Mammary epithelial cell (primary cell): ENCODE measurements at regions of chr11 and their contacts with region 1.

Region 1: GRCh38 chr11:58900479-58901420 is 38.5 kb upstream of the GLYATL1 start:
- DNase-seq: peak; percentile 85
- H3K4me3 ChIP-seq: peak overlapping the region in 2 of 3 experiments; percentile 1 to 27
- H3K27ac ChIP-seq: no peak overlapping the region
- H3K4me1 ChIP-seq: peaks cover 20% of the 10 kb centered on the region
- H3K27me3 ChIP-seq: no peaks in the 10 kb centered on the region
- CTCF ChIP-seq: peak; percentile 80 to 86

Region 2: DNA sequence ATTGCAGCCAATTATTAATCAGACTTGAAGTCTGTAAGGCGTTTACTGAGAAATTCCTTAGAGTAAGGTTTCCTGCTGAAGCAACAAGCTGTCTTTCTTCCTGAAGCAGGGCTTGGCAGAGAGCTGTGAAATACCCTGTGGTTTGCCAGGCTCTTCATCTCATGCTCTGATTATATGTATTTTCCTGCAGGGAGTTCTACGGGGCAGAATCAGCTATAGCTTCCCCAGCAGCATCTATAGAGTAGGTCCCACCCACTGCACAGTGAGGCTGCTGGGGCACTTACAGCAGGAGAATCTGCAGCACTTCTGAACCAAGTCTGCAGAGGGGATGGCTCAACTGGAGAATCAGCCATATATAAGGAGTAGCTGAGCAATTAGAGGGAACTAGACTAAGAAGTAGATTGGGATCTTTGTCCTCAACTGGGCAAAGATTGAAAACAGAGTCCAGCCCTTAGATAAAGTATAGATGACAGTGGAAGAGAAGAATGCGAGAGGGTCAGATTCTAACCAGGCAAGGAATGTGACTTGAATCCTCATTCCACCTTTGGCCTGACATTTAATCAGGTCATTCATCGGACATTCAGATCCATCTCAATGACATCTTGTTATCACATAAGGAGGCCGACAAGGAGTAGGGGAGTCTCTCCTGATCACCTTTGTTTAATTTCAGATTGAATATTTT is 240.7 kb before region 1 on chr11:
- CTCF ChIA-PET with region 1: interaction called, 3 read pairs
- dilution Hi-C with region 1: no loop called
- in situ Hi-C with region 1: loop called in 1 of 2 experiments (anchors 5 kb)
- intact Hi-C with region 1: no loop called
- DNase-seq: no peak
- H3K4me3 ChIP-seq: no peak overlapping the region
- H3K27ac ChIP-seq: no peak overlapping the region
- H3K4me1 ChIP-seq: peaks cover 24% of the 10 kb centered on the region
- H3K27me3 ChIP-seq: no peaks in the 10 kb centered on the region
- CTCF ChIP-seq: no peak

Region 3: GRCh38 chr11:58688789-58689503 is 211.8 kb before region 1 on chr11:
- CTCF ChIA-PET with region 1: interaction called, 10 read pairs
- dilution Hi-C with region 1: no loop called
- in situ Hi-C with region 1: loop called in 1 of 2 experiments (anchors 25 kb)
- intact Hi-C with region 1: no loop called
- DNase-seq: peak; percentile 91
- H3K4me3 ChIP-seq: no peak overlapping the region
- H3K27ac ChIP-seq: peak overlapping the region; percentile 45
- H3K4me1 ChIP-seq: peaks cover 18% of the 10 kb centered on the region
- H3K27me3 ChIP-seq: no peaks in the 10 kb centered on the region
- CTCF ChIP-seq: no peak

Region 4: DNA sequence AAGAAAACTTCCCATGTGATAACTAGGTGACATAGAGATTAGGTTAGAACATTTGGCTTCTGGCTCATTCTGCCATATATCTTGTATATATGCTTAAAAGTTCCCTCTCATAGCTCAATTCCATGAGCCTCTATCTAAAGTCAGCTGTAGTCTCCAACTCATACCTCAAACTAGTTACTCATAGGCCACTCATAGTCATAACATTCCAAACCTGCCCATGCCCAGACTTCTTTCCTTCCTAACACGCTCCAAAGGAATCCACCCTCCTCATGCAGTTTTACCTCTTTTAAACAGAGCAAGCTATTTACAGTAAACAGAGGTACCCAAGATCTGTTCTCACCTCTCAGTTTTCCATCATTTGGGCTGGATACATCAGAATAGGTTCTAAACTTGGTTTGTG is 95.7 kb before region 1 on chr11:
- CTCF ChIA-PET with region 1: no interaction called
- dilution Hi-C with region 1: loop called (anchors 5 kb)
- in situ Hi-C with region 1: no loop called
- intact Hi-C with region 1: no loop called
- DNase-seq: peak; percentile 79
- H3K4me3 ChIP-seq: no peak overlapping the region
- H3K27ac ChIP-seq: no peak overlapping the region
- H3K4me1 ChIP-seq: peaks cover 16% of the 10 kb centered on the region
- H3K27me3 ChIP-seq: no peaks in the 10 kb centered on the region
- CTCF ChIP-seq: no peak

Region 5: DNA sequence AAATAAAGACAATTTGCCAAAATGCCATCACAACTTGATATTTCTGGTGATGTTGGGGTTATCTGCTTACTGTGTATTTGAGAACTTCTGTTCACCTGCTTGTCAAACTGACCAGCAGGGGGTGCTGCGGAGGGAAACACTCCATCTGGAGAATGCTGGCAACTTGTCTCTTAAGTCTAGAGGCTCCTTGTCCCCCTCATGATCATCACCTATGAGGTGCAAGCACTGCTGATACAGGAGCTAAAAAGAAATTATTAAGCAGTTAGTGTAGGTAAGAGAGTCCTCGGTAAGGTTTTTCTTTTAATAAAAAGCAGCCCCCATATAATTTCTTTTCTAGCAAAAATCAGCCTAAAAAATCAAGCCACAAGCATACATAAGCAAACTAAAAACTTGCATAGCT is 152.6 kb after region 1 on chr11:
- CTCF ChIA-PET with region 1: interaction called, 16 read pairs
- dilution Hi-C with region 1: no loop called
- in situ Hi-C with region 1: no loop called
- intact Hi-C with region 1: loop called (anchors 1 kb)
- DNase-seq: peak; percentile 25
- H3K4me3 ChIP-seq: no peak overlapping the region
- H3K27ac ChIP-seq: no peak overlapping the region
- H3K4me1 ChIP-seq: no peaks in the 10 kb centered on the region
- H3K27me3 ChIP-seq: peaks cover 4% of the 10 kb centered on the region
- CTCF ChIP-seq: peak; percentile 66 to 73